Heart right ventricle (tissue), 16 donors: ENCODE measurements at regions of chr2 and their contacts with region 1.

Region 1: DNA sequence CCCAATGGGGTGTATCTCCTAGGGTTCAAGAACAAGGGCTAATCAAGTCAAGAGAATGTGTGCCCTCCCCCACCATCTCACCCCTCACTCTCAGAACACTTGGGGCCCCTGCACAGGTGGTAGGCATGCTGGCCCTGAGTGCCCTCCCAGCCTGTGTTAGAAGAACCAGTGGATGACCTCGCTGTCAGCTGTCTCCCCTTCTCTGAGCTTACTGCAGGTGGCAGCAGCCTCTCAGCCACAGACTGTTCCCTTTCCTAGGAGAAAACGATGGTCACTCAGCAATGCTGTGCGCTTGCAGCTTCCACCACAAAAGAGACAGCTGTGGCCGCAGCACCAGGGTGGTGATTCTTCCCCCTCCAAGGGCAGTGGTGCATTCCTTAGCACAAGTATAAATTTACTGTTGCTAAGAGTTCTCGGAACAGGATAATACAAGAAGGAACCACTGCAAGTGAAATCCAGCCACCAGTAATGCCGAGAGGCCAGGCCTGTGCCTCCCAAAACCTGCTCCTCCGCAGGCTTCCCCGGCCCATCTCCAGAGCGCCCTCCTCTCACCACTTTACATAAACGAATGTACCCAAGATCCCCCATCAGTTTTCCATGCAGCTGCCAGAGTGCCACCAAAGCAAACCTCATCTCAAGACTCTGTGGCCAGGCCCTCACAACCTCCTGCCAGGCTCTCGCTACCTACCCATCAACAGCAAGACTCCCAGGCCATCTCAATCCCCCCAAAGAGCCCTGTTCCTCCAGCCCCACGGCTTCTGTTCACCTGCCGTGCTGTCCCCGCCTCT is 935 bp upstream of the RAMP1 start:
- DNase-seq: peak; percentile 47 to 70
- ATAC-seq: peak; percentile 62 to 84 (median 82)
- H3K4me3 ChIP-seq: peak overlapping the region in 5 of 10 donors; percentile 21 to 66 (median 59)
- H3K27ac ChIP-seq: peak overlapping the region in 9 of 10 donors; percentile 81 to 94 (median 89)
- H3K4me1 ChIP-seq: peaks cover 0 to 32% (median 8%) of the 10 kb centered on the region in 9 donors
- H3K27me3 ChIP-seq: peaks cover 0 to 49% (median 31%) of the 10 kb centered on the region in 7 donors
- CTCF ChIP-seq: peak; percentile 40 to 85 (median 73)

Region 2: DNA sequence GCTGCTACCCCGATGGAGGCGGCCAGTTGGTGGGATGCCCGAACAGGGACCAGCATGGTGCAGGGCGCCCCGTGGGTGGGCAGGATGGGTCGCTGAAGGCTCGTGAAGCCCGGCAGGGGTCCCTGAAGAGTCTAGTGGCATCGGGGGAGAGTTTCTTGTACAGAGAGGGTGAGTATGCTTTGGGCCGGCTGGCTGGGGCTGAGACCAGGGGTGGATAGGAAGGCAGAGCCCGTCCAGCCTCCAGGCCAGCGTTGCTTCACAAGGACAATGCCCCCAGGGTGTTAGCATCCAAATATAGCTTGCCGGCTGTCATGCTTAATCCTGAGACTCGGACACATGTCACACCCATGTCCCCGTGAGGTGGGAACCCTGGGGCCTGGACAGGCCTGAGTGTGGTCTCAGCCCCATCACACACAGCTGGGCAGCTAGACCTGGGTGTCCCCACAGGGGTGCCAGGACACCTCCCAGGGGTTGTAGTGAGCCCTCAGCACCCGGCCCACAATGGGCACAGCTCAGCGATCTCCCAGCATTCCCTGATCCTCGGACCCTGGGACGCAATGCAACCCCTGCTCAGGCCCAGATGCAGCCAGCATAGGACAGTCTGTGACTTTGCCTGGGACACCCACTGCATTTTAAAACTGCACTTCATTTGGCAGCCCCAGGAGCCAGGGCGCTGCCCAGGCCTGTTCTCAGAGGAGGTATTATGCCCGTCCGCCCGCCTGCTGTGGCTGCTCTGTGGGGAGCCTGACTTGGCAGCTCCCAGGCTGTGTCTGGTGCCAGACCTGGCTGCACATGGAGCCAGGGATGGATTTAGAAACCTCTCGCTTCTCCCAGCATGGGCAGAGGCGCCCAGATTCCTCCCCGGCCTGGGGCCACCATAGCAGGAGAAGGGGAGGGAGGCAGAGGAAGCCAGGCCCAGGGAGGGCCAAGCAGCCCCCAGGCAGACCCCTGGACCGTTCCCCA is 37.3 kb after region 1 on chr2:
- intact Hi-C with region 1: loop called in 5 of 10 experiments (anchors 5 kb)
- DNase-seq: peak; percentile 71 to 73
- ATAC-seq: peak; percentile 74 to 92 (median 84)
- H3K4me3 ChIP-seq: no peak overlapping the region
- H3K27ac ChIP-seq: peak overlapping the region; percentile 84 to 97 (median 92)
- H3K4me1 ChIP-seq: peaks cover 20 to 75% (median 62%) of the 10 kb centered on the region in 9 donors
- H3K27me3 ChIP-seq: no peaks in the 10 kb centered on the region
- CTCF ChIP-seq: no peak

Region 3: DNA sequence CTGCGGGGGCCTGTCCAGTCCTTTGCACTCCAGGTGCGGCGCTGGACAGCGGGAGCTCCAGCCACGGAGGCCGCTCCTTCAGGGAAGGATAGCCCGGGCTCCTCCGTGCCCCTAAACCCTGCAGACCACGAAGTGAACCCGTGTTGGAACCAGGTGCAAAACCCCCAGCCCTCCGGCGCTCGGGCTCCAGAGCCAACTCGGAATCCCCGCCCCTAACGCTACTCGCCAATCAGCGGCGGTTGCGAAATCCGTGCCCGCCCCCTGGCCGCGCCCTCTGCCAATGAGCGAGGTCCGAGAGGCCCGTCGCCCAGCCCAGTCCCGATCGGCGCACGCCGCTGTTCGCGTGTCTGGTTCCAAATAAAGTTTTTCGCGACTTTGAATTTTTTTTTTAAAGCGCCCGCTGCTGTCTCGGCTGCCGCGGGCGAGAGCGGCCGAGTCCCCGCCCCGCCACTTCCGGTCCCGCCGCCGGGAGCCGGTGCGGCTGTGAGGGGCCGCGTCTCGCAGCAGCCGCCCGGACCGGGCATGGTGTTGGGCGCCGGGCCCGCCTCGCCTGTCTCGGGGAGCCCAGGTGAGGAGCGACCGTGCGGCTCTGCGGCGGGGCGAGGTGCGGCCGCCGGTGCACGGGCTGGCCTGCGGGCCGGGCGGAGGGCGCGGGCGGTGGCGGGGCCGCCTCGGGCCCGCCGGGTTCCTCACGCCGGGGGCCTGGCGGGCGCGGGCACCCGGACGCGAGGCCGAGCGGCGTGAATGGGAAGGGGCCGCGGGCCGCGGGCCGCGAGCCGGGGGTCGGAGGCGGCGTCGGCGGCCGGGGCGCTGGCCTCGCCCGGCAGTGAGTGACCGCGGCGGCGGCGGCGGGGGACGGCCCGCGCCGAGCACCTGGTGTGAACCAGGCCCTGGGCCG is 108.3 kb after region 1 on chr2 and contains the start of gene UBE2F:
- intact Hi-C with region 1: loop called in 4 of 10 experiments (anchors 5 to 10 kb)
- DNase-seq: peak; percentile 97 to 98
- ATAC-seq: peak; percentile 97 to 99 (median 98)
- H3K4me3 ChIP-seq: peak within 1 kb of the TSS; percentile 60 to 87 (median 74)
- H3K27ac ChIP-seq: peak within 1 kb of the TSS in 9 of 10 donors; percentile 67 to 87 (median 75)
- H3K4me1 ChIP-seq: peaks cover 15 to 50% (median 31%) of the 10 kb centered on the region in 9 donors
- H3K27me3 ChIP-seq: no peaks in the 10 kb centered on the region
- CTCF ChIP-seq: no peak
- total RNA-seq, gene UBE2F: 53.6 to 82.2 (median 63.7) TPM

Region 4: DNA sequence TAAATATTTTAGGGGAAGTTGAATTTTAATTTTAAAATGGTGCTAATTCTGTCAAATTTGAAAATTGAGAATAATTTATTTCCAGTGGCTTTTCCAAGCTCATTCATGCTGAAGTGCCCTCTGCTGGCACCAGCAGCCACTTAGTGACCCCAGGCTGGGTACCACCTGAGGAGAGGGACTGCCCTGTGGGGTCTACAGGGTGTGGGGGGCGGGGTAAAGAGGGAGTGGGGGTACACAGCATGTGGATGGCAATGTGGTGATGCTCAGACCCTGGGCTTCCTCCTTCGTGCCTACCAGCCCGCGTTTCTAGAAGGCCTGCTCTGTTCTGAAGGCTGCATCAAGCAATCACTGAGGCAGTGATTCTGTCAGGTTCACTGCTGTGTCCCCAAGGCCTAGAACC is 157.2 kb after region 1 on chr2:
- intact Hi-C with region 1: loop called in 1 of 10 experiments (anchors 10 kb)
- DNase-seq: no peak
- ATAC-seq: no peak
- H3K4me3 ChIP-seq: no peak overlapping the region
- H3K27ac ChIP-seq: no peak overlapping the region
- H3K4me1 ChIP-seq: peaks cover 0 to 5% (median 0%) of the 10 kb centered on the region in 9 donors
- H3K27me3 ChIP-seq: no peaks in the 10 kb centered on the region
- CTCF ChIP-seq: peak in 4 of 9 donors; percentile 28 to 41 (median 32)

Region 5: DNA sequence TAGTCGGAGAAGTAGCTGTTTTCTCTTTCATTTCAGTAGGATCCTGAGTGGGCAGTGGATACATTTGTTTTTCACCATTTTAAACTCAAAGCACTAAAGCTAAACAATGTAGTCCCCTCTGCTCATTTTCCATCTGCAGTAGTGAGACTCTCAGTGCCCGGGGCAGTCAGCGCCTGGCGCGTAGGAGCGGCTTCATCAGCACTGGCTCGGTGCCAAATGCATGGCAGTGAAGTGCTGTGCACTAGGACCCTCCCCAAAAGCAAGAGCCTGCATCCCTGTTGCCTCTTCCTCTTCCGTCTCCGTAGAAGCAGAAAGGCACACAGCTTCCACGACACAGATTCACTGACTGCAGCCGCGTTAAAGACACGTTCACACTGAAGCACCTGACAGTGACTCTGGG is 222.7 kb after region 1 on chr2:
- intact Hi-C with region 1: no loop called
- DNase-seq: no peak
- ATAC-seq: no peak
- H3K4me3 ChIP-seq: no peak overlapping the region
- H3K27ac ChIP-seq: no peak overlapping the region
- H3K4me1 ChIP-seq: peaks cover 0 to 4% (median 0%) of the 10 kb centered on the region in 9 donors
- H3K27me3 ChIP-seq: no peaks in the 10 kb centered on the region
- CTCF ChIP-seq: no peak

Region 6: DNA sequence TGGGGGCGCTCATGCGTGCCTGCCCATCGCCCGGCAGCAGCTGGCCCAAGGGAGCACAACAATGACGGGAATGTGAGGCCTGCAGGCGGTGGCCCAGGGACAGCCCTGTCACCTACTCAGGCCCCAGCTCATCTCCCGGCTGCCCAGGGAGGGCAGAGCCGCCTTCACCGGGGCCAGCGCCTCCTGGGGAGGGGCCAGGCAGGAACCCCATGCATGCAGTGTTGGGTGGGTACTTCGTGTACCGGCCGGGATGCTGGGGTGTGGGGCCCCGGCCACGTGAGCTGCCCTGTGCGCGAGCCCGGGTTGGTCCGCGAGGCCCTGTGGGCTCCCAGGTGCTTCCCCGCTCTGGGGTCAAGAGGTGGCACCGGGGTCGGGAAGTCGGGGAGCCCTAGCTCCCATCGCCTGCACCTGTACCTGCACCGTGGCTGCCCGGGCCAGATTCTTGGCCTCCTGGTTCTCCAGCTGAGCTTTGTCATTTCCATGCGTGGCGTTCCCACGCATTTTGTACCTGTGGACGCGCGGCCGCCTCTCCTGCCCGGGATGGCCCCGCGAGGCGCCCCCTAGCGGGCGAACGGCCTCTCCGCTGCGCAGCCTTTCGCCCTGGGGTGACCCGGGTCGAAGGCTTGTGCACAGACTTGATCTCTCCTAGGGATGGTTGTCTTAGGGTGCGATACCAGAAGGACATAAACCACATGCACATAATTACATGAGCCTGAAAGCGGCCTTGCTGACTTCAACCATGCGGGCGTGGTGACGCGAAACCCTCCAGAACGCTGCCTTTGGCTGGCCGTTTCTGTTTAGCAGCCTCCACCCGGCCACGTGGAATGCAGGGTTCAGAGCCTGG is 280.9 kb after region 1 on chr2:
- intact Hi-C with region 1: loop called in 6 of 10 experiments (anchors 5 to 10 kb)
- DNase-seq: no peak
- ATAC-seq: peak; percentile 25 to 68 (median 50)
- H3K4me3 ChIP-seq: peak overlapping the region; percentile 5 to 54 (median 40)
- H3K27ac ChIP-seq: peak overlapping the region; percentile 69 to 96 (median 89)
- H3K4me1 ChIP-seq: peaks cover 6 to 71% (median 51%) of the 10 kb centered on the region in 9 donors
- H3K27me3 ChIP-seq: peaks cover 0 to 2% (median 0%) of the 10 kb centered on the region in 7 donors
- CTCF ChIP-seq: peak; percentile 33 to 74 (median 64)

Region 7: GRCh38 chr2:238263204-238264071 is 404.9 kb after region 1 on chr2:
- intact Hi-C with region 1: loop called in 8 of 10 experiments (anchors 1 to 10 kb)
- DNase-seq: peak; percentile 91 to 92
- ATAC-seq: peak; percentile 72 to 87 (median 83)
- H3K4me3 ChIP-seq: no peak overlapping the region
- H3K27ac ChIP-seq: peak overlapping the region in 9 of 10 donors; percentile 34 to 70 (median 50)
- H3K4me1 ChIP-seq: peaks cover 3 to 42% (median 29%) of the 10 kb centered on the region in 9 donors
- H3K27me3 ChIP-seq: no peaks in the 10 kb centered on the region
- CTCF ChIP-seq: peak; percentile 71 to 89 (median 82)